OCI-LY7 (cell line): ENCODE measurements at regions of chr18 and their contacts with region 1.

Region 1: GRCh38 chr18:57084331-57085271 is 62.3 kb upstream of the BOD1L2 start:
- DNase-seq: peak; percentile 58
- H3K4me3 ChIP-seq: peak overlapping the region; percentile 55
- H3K27ac ChIP-seq: peak overlapping the region; percentile 71
- H3K4me1 ChIP-seq: peaks cover 73% of the 10 kb centered on the region
- CTCF ChIP-seq: no peak

Region 2: DNA sequence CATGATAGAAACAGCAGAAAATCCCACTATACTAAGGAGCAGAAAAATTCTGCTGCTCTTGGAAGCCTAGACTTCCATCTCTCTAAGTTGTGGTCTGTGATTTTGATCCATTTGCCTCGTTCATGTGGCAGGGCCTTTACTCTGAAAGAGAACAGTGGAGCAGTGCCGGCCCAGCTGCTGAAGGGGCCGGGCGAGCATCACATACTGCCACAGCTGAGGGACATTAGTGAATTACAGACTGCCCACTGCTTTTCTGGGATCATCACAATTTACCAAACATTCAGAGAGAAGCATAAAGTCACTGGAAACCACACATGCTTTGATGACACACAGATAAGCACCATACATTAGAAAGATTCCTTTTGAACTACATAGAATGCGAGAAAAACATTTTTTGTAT is 154.7 kb before region 1 on chr18:
- CTCF ChIA-PET with region 1: no interaction called
- POLR2A ChIA-PET with region 1: no interaction called
- intact Hi-C with region 1: no loop called
- DNase-seq: no peak
- H3K4me3 ChIP-seq: no peak overlapping the region
- H3K27ac ChIP-seq: no peak overlapping the region
- H3K4me1 ChIP-seq: no peaks in the 10 kb centered on the region
- CTCF ChIP-seq: no peak

Region 3: DNA sequence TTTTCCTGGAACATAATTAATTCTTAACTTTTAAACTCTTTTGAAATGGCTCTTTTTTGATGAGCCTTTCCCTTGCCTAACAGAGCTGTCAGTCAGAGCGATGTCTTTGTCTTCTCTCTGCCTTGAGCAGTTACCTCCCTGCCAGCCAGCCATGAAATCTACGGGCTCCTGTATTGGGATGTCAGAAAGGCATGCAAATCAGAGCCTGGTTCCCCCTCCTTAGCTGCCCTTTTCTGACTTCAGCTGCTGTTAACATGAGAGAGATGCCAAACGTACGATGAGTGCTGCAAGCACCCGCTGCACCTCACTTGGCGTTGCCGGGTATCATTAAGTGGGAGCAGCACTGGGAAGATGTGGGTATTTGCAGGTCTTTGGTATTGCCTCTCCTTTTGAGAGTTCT is 69.2 kb before region 1 on chr18:
- CTCF ChIA-PET with region 1: no interaction called
- POLR2A ChIA-PET with region 1: no interaction called
- intact Hi-C with region 1: loop called (anchors 1 kb)
- DNase-seq: no peak
- H3K4me3 ChIP-seq: no peak overlapping the region
- H3K27ac ChIP-seq: no peak overlapping the region
- H3K4me1 ChIP-seq: peaks cover 33% of the 10 kb centered on the region
- CTCF ChIP-seq: no peak

Region 4: GRCh38 chr18:57362714-57363113 is 278.1 kb after region 1 on chr18:
- CTCF ChIA-PET with region 1: no interaction called
- POLR2A ChIA-PET with region 1: no interaction called
- intact Hi-C with region 1: no loop called
- DNase-seq: no peak
- H3K4me3 ChIP-seq: no peak overlapping the region
- H3K27ac ChIP-seq: no peak overlapping the region
- H3K4me1 ChIP-seq: no peaks in the 10 kb centered on the region
- CTCF ChIP-seq: no peak

Region 5: GRCh38 chr18:57427429-57428181 is 343.0 kb after region 1 on chr18:
- CTCF ChIA-PET with region 1: no interaction called
- POLR2A ChIA-PET with region 1: no interaction called
- intact Hi-C with region 1: loop called (anchors 10 kb)
- DNase-seq: no peak
- H3K4me3 ChIP-seq: no peak overlapping the region
- H3K27ac ChIP-seq: no peak overlapping the region
- H3K4me1 ChIP-seq: peaks cover 32% of the 10 kb centered on the region
- CTCF ChIP-seq: no peak